WTC11 (cell line): ENCODE measurements at regions of chr17 and their contacts with region 1.

Region 1: GRCh38 chr17:48555258-48556228 is 10.6 kb upstream of the HOXB2 start:
- DNase-seq: no peak
- ATAC-seq: peak; percentile 7; the same call in 1 of the 2 replicates
- H3K4me3 Mint-ChIP-seq: peak overlapping the region; percentile 58
- H3K27ac Mint-ChIP-seq: no peak overlapping the region
- H3K4me1 Mint-ChIP-seq: peaks cover 38% of the 10 kb centered on the region
- H3K27me3 Mint-ChIP-seq: peaks cover 100% of the 10 kb centered on the region; the same call in 1 of the 2 replicates
- CTCF ChIP-seq: no peak

Region 2: GRCh38 chr17:48500966-48501426 is 54.5 kb before region 1 on chr17:
- CTCF ChIA-PET with region 1: interaction called, 11 read pairs
- POLR2A ChIA-PET with region 1: interaction called, 3 read pairs
- DNase-seq: no peak
- ATAC-seq: peak; percentile 84
- H3K4me3 Mint-ChIP-seq: no peak overlapping the region
- H3K27ac Mint-ChIP-seq: no peak overlapping the region
- H3K4me1 Mint-ChIP-seq: peaks cover 38% of the 10 kb centered on the region
- H3K27me3 Mint-ChIP-seq: peaks cover 70% of the 10 kb centered on the region
- CTCF ChIP-seq: no peak

Region 3: GRCh38 chr17:48582750-48583069 is 27.2 kb after region 1 on chr17:
- CTCF ChIA-PET with region 1: no interaction called
- POLR2A ChIA-PET with region 1: no interaction called
- DNase-seq: no peak
- ATAC-seq: no peak
- H3K4me3 Mint-ChIP-seq: peak overlapping the region; percentile 12; the same call in 1 of the 2 replicates
- H3K27ac Mint-ChIP-seq: no peak overlapping the region
- H3K4me1 Mint-ChIP-seq: peaks cover 53% of the 10 kb centered on the region
- H3K27me3 Mint-ChIP-seq: peaks cover 98% of the 10 kb centered on the region; the same call in 1 of the 2 replicates
- CTCF ChIP-seq: no peak

Region 4: GRCh38 chr17:48593840-48594537 is 38.4 kb after region 1 on chr17:
- CTCF ChIA-PET with region 1: interaction called, 11 read pairs
- POLR2A ChIA-PET with region 1: no interaction called
- DNase-seq: peak; percentile 90
- ATAC-seq: peak; percentile 20
- H3K4me3 Mint-ChIP-seq: peak overlapping the region; percentile 50
- H3K27ac Mint-ChIP-seq: no peak overlapping the region
- H3K4me1 Mint-ChIP-seq: peaks cover 55% of the 10 kb centered on the region
- H3K27me3 Mint-ChIP-seq: peaks cover 100% of the 10 kb centered on the region; the same call in 1 of the 2 replicates
- CTCF ChIP-seq: peak; percentile 90